ENCODE measurements at regions of chr9 and their contacts with region 1.

Region 1: DNA sequence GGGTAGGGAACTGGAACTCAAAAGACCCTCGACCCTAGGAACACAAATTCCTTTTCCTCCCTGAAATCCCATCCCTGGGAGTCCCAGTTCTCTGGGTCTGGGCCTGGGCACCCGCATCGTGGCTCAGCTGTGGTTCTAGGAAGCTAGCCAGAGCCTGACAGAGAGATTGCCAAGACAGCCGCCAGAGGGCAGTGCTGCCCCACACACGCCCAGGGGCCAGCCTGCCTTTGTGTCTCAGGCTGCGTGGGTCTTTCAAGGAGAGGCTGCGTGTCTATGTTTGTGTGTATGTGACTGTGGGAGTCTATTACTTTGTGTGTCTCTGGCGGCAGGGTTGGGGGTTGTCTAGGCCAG is 32.0 kb upstream of the TTLL11 start:
- DNase-seq: peak; percentile 78 to 88
- H3K4me3 ChIP-seq: no peak overlapping the region
- H3K4me3 Mint-ChIP-seq: peak overlapping the region; percentile 31
- H3K27ac Mint-ChIP-seq: peak overlapping the region; percentile 10
- H3K4me1 ChIP-seq: peaks cover 9% of the 10 kb centered on the region; the same call in 1 of the 2 replicates
- H3K4me1 Mint-ChIP-seq: no peaks in the 10 kb centered on the region
- H3K27me3 ChIP-seq: no peaks in the 10 kb centered on the region
- H3K27me3 Mint-ChIP-seq: peaks cover 3% of the 10 kb centered on the region
- CTCF ChIP-seq: peak; percentile 89 to 93

Region 2: DNA sequence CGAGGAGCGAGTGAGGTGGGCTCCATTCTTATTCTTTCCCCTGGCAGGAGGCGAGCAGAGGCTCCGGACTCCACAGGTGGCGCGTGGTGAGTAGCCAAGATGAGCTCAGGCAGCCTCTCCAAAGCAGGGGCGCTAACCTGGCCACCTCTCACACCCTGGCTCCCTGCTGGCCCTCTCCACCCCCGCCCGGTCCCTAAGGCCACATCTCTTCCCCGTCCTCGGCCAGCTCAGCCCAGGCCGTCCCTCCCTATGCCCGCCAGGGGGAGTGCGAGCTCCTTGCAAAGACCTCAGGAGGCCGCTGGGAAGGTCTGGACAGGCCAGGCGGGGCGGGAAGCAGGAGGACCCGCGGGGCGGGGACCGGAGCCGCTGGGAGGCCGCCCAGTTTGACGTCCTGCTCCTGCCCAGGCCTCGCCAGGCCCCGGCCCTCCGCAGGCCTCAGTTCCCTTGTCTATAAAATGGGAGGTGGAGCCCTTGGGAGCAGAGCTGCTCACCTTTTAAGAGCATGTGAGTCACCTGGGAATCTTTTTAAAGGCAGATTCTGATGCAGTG is 579.2 kb before region 1 on chr9:
- CTCF ChIA-PET with region 1: no interaction called
- POLR2A ChIA-PET with region 1: no interaction called
- intact Hi-C with region 1: loop called (anchors 1 kb)
- DNase-seq: peak; percentile 96 to 97
- H3K4me3 ChIP-seq: peak overlapping the region; percentile 26
- H3K4me3 Mint-ChIP-seq: no peak overlapping the region
- H3K27ac Mint-ChIP-seq: no peak overlapping the region
- H3K4me1 ChIP-seq: no peaks in the 10 kb centered on the region
- H3K4me1 Mint-ChIP-seq: no peaks in the 10 kb centered on the region
- H3K27me3 ChIP-seq: no peaks in the 10 kb centered on the region
- H3K27me3 Mint-ChIP-seq: no peaks in the 10 kb centered on the region
- CTCF ChIP-seq: peak; percentile 92 to 97

Region 3: GRCh38 chr9:121756474-121757280 is 368.5 kb before region 1 on chr9:
- CTCF ChIA-PET with region 1: no interaction called
- POLR2A ChIA-PET with region 1: no interaction called
- intact Hi-C with region 1: no loop called
- DNase-seq: no peak
- H3K4me3 ChIP-seq: no peak overlapping the region
- H3K4me3 Mint-ChIP-seq: no peak overlapping the region
- H3K27ac Mint-ChIP-seq: no peak overlapping the region
- H3K4me1 ChIP-seq: peaks cover under 1% of the 10 kb centered on the region; the same call in 1 of the 2 replicates
- H3K4me1 Mint-ChIP-seq: no peaks in the 10 kb centered on the region
- H3K27me3 ChIP-seq: no peaks in the 10 kb centered on the region
- H3K27me3 Mint-ChIP-seq: no peaks in the 10 kb centered on the region
- CTCF ChIP-seq: no peak

Region 4: DNA sequence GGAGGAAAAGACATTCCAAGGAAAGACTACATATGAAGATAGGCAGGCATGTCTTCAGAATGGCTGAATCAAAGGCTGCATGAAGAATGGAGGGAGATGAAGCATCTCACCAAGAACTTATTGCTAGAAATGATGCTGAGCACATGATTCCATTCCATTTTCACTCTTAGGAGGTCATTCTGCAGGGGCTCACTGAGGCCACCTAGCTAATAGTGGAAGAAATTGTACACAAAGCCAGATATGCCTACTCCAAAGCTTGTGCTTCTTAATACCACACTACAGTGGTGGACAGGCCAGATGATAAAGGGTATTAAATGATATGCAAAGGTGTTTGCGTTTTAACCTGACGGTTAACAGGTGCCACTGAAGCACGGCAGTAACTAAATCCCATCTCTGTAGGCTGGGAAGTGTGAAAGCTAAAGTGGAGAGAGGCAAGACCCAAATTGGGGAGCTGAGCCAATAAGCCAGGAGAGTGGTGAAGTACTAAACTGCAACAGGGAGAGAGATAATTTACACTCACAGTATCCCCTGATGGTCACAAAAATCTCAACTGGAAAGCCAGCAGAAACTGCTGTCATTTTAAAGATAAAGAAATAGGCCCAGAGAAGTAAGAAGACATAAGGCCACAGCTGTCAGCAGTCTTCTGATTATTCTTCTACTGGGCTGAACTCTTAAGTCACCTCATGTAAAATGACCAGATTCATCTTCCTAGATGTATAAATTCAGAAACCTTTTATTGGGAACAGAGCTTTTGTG is 19.9 kb after region 1 on chr9:
- CTCF ChIA-PET with region 1: interaction called, 12 read pairs
- POLR2A ChIA-PET with region 1: no interaction called
- intact Hi-C with region 1: no loop called
- DNase-seq: no peak
- H3K4me3 ChIP-seq: no peak overlapping the region
- H3K4me3 Mint-ChIP-seq: no peak overlapping the region
- H3K27ac Mint-ChIP-seq: no peak overlapping the region
- H3K4me1 ChIP-seq: no peaks in the 10 kb centered on the region
- H3K4me1 Mint-ChIP-seq: no peaks in the 10 kb centered on the region
- H3K27me3 ChIP-seq: no peaks in the 10 kb centered on the region
- H3K27me3 Mint-ChIP-seq: no peaks in the 10 kb centered on the region
- CTCF ChIP-seq: peak in 1 of 2 experiments; percentile 53

Region 5: GRCh38 chr9:122168356-122168755 is 43.2 kb after region 1 on chr9:
- CTCF ChIA-PET with region 1: no interaction called
- POLR2A ChIA-PET with region 1: no interaction called
- intact Hi-C with region 1: no loop called
- DNase-seq: no peak
- H3K4me3 ChIP-seq: no peak overlapping the region
- H3K4me3 Mint-ChIP-seq: no peak overlapping the region
- H3K27ac Mint-ChIP-seq: no peak overlapping the region
- H3K4me1 ChIP-seq: no peaks in the 10 kb centered on the region
- H3K4me1 Mint-ChIP-seq: no peaks in the 10 kb centered on the region
- H3K27me3 ChIP-seq: no peaks in the 10 kb centered on the region
- H3K27me3 Mint-ChIP-seq: peaks cover 3% of the 10 kb centered on the region
- CTCF ChIP-seq: no peak

Region 6: GRCh38 chr9:122234022-122234748 is 109.1 kb after region 1 on chr9:
- CTCF ChIA-PET with region 1: no interaction called
- POLR2A ChIA-PET with region 1: no interaction called
- intact Hi-C with region 1: loop called (anchors 5 kb)
- DNase-seq: no peak
- H3K4me3 ChIP-seq: no peak overlapping the region
- H3K4me3 Mint-ChIP-seq: no peak overlapping the region
- H3K27ac Mint-ChIP-seq: no peak overlapping the region
- H3K4me1 ChIP-seq: 0 out of 2 replicates have a peak, but pooled peaks cover 8% of the 10 kb centered on the region
- H3K4me1 Mint-ChIP-seq: no peaks in the 10 kb centered on the region
- H3K27me3 ChIP-seq: no peaks in the 10 kb centered on the region; the same call in 1 of the 2 replicates
- H3K27me3 Mint-ChIP-seq: peaks cover 3% of the 10 kb centered on the region
- CTCF ChIP-seq: no peak

Region 7: GRCh38 chr9:122350638-122351355 is 225.7 kb after region 1 on chr9:
- CTCF ChIA-PET with region 1: interaction called, 104 read pairs
- POLR2A ChIA-PET with region 1: no interaction called
- intact Hi-C with region 1: loop called (anchors 1 kb)
- DNase-seq: peak; percentile 72 to 88
- H3K4me3 ChIP-seq: no peak overlapping the region
- H3K4me3 Mint-ChIP-seq: no peak overlapping the region
- H3K27ac Mint-ChIP-seq: no peak overlapping the region
- H3K4me1 ChIP-seq: no peaks in the 10 kb centered on the region; the same call in 1 of the 2 replicates
- H3K4me1 Mint-ChIP-seq: peaks cover 6% of the 10 kb centered on the region
- H3K27me3 ChIP-seq: no peaks in the 10 kb centered on the region
- H3K27me3 Mint-ChIP-seq: peaks cover 4% of the 10 kb centered on the region
- CTCF ChIP-seq: peak; percentile 94 to 95

Region 8: GRCh38 chr9:122810306-122810946 is 685.3 kb after region 1 on chr9:
- CTCF ChIA-PET with region 1: no interaction called
- POLR2A ChIA-PET with region 1: no interaction called
- intact Hi-C with region 1: loop called (anchors 2 kb)
- DNase-seq: peak; percentile 73 to 74
- H3K4me3 ChIP-seq: no peak overlapping the region
- H3K4me3 Mint-ChIP-seq: no peak overlapping the region
- H3K27ac Mint-ChIP-seq: no peak overlapping the region
- H3K4me1 ChIP-seq: peaks cover 9% of the 10 kb centered on the region; the same call in 1 of the 2 replicates
- H3K4me1 Mint-ChIP-seq: no peaks in the 10 kb centered on the region
- H3K27me3 ChIP-seq: no peaks in the 10 kb centered on the region
- H3K27me3 Mint-ChIP-seq: no peaks in the 10 kb centered on the region
- CTCF ChIP-seq: peak; percentile 55 to 83